SK-N-SH (cell line): ENCODE measurements at regions of chr20 and their contacts with region 1.

Region 1: DNA sequence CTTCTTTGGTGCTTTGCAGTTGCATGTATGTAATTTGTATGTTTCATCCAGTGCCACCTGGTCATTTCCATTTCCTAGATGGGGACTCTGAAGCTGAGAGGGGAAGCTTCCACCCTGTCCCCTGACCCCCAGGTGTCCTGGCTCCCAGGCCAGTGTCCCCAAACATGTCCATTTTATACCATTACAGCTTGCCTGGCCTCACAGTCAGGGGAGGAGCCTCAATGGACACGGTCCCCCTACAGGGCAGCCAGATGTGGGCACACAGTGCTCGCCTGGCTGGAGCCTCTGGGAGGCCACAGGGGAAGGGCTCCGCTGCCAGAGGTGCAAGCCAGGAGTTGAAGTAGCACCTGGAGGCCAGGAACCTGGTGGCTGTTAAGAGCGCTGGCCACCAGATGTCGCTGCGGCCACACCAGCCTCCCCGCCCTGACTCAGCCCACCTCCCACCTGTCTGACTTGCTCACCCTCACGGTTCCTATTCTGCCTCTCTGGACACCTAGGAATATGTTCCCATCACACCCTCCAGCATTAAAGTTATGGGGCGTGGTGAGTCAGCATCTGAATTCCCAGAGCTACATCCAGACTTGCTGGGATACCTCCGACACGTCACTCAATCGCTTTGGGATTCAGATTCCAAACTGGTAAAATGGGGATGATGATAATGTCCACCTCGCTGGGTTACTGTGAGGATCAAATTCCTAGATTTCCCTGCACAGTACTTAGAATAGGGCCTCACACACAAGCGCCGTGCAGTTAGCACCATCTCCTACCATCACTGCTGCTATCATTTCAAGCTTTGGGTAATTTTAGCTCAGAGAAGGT is 107.4 kb downstream of the SULF2 start:
- DNase-seq: peak; percentile 83
- H3K4me3 ChIP-seq: no peak overlapping the region; a peak in 1 of 4 replicates
- H3K27ac ChIP-seq: no peak overlapping the region
- H3K4me1 ChIP-seq: peaks cover 0 to 5% of the 10 kb centered on the region in 2 experiments; a peak in 1 of 4 replicates
- H3K27me3 ChIP-seq: no peaks in the 10 kb centered on the region
- CTCF ChIP-seq: peak; percentile 57
- EP300 ChIP-seq: no peak
- RAD21 ChIP-seq: peak; percentile 84

Region 2: GRCh38 chr20:47352332-47353238 is 325.3 kb before region 1 on chr20:
- CTCF ChIA-PET with region 1: no interaction called
- POLR2A ChIA-PET with region 1: no interaction called
- DNase-seq: peak; percentile 36
- H3K4me3 ChIP-seq: peak overlapping the region; percentile 19 to 52
- H3K27ac ChIP-seq: peak overlapping the region; percentile 97 to 100
- H3K4me1 ChIP-seq: peaks cover 72 to 79% of the 10 kb centered on the region in 2 experiments
- H3K27me3 ChIP-seq: no peaks in the 10 kb centered on the region
- CTCF ChIP-seq: no peak
- EP300 ChIP-seq: no peak
- RAD21 ChIP-seq: no peak

Region 3: DNA sequence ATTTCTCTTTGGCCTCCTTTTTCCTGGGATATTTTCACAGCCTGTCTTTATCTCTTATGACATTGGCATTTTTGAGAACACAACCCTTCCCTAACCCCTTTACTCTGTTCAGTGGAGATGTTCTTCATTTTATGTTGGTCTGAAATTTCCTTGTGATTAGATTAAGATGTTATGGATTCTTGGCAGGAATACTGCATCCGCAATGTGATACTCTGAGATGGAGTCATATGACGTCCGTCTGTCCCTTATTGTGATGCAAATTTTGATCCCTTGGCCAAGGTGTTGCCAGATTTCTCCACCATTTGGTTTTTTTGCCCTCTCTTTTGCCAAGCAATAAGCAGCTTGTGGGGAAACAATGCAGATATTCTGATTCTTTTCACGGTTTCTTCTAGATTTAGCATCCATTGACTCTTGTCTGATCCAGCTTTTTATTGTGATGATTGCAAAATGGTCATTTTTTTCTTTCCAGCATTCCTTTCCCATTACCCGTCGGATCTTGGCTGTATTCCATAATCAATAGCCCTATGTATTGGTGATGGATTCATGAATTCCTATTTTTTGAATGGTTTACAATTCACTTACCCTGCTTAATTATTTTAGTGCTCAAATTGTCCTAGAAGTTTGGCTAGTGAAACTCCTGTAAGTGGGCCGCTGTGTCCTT is 91.1 kb before region 1 on chr20:
- CTCF ChIA-PET with region 1: no interaction called
- POLR2A ChIA-PET with region 1: no interaction called
- DNase-seq: no peak
- H3K4me3 ChIP-seq: no peak overlapping the region
- H3K27ac ChIP-seq: peak overlapping the region; percentile 36 to 50; a peak in 3 of 4 replicates
- H3K4me1 ChIP-seq: no peaks in the 10 kb centered on the region
- H3K27me3 ChIP-seq: no peaks in the 10 kb centered on the region
- CTCF ChIP-seq: no peak
- EP300 ChIP-seq: no peak
- RAD21 ChIP-seq: no peak

Region 4: DNA sequence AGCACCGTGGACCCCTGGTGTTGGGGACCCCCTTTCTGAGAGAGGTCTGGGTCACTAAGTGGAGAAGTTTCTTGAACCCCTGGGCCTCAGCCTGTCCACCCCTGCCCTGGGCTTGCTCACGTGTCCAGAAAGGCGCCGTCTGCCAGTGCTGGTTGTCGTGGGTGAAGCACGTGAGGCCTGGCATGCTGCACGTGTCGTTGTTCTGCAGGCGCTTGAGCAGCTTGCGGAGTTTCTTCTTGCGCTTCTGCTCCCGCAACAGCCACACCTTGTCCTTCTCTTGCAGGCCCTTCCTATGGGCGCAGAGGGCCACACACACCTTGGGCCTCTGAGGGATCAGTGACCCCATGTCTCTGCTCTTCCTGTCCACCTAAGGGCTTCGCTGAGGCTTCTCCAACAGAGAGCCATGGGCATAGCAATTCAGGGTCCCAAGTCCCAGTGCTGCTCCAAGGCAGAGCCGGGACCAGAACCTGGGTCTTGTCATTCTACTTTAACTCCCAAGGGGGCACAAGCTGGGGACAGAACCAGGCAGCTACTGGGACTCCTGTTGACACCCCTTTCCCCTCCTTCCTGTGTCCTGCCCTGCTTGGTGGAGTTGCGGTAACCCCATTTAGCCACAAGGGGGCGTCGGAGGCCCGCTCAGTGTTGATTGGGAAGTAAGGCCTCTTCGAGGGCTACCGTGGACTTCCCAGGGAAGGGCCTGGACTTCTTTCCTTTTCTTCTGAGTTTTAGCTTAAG is 14.3 kb before region 1 on chr20:
- CTCF ChIA-PET with region 1: interaction called, 39 read pairs
- POLR2A ChIA-PET with region 1: no interaction called
- DNase-seq: peak; percentile 87
- H3K4me3 ChIP-seq: peak overlapping the region in 1 of 2 experiments; percentile 20; a peak in 1 of 4 replicates
- H3K27ac ChIP-seq: no peak overlapping the region
- H3K4me1 ChIP-seq: peaks cover 3 to 4% of the 10 kb centered on the region in 2 experiments; a peak in 2 of 4 replicates
- H3K27me3 ChIP-seq: no peaks in the 10 kb centered on the region
- CTCF ChIP-seq: peak; percentile 95
- EP300 ChIP-seq: no peak
- RAD21 ChIP-seq: peak; percentile 92

Region 5: DNA sequence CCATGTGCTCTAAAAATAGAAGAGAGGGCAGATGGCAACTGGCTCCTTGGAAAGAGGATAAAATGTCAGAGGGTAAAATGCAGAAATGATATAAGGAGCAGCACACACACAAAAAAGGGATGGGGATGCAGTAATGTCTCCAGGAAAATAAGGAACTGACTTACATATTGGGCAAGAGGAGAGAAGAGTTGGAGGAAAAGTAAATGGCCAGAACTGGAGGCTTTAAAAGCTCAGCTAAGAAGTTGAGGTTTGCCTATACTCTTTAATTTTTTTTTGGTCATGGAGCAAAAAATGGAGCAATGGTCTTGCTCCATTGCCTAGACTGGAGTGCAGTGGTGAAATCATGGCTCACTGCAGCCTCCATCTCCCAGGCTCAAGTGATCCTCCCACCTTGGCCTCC is 13.8 kb after region 1 on chr20:
- CTCF ChIA-PET with region 1: interaction called, 12 read pairs
- POLR2A ChIA-PET with region 1: no interaction called
- DNase-seq: no peak
- H3K4me3 ChIP-seq: no peak overlapping the region
- H3K27ac ChIP-seq: no peak overlapping the region
- H3K4me1 ChIP-seq: peaks cover 0 to 3% of the 10 kb centered on the region in 2 experiments; a peak in 2 of 4 replicates
- H3K27me3 ChIP-seq: no peaks in the 10 kb centered on the region
- CTCF ChIP-seq: no peak
- EP300 ChIP-seq: no peak
- RAD21 ChIP-seq: no peak

Region 6: GRCh38 chr20:47713878-47714450 is 36.1 kb after region 1 on chr20:
- CTCF ChIA-PET with region 1: interaction called, 37 read pairs
- POLR2A ChIA-PET with region 1: no interaction called
- DNase-seq: no peak
- H3K4me3 ChIP-seq: no peak overlapping the region
- H3K27ac ChIP-seq: no peak overlapping the region
- H3K4me1 ChIP-seq: peaks cover 0 to 32% of the 10 kb centered on the region in 2 experiments; a peak in 2 of 4 replicates
- H3K27me3 ChIP-seq: no peaks in the 10 kb centered on the region
- CTCF ChIP-seq: no peak
- EP300 ChIP-seq: no peak
- RAD21 ChIP-seq: no peak

Region 7: GRCh38 chr20:47725248-47725973 is 47.6 kb after region 1 on chr20:
- CTCF ChIA-PET with region 1: interaction called, 33 read pairs
- POLR2A ChIA-PET with region 1: no interaction called
- DNase-seq: peak; percentile 81
- H3K4me3 ChIP-seq: peak overlapping the region in 1 of 2 experiments; percentile 25; a peak in 1 of 4 replicates
- H3K27ac ChIP-seq: no peak overlapping the region
- H3K4me1 ChIP-seq: peaks cover 0 to 7% of the 10 kb centered on the region in 2 experiments; a peak in 1 of 4 replicates
- H3K27me3 ChIP-seq: no peaks in the 10 kb centered on the region
- CTCF ChIP-seq: peak; percentile 85
- EP300 ChIP-seq: no peak
- RAD21 ChIP-seq: peak; percentile 89

Region 8: GRCh38 chr20:47772995-47773716 is 95.3 kb after region 1 on chr20:
- CTCF ChIA-PET with region 1: interaction called, 25 read pairs
- POLR2A ChIA-PET with region 1: no interaction called
- DNase-seq: no peak
- H3K4me3 ChIP-seq: no peak overlapping the region
- H3K27ac ChIP-seq: no peak overlapping the region
- H3K4me1 ChIP-seq: peaks cover 0 to 17% of the 10 kb centered on the region in 2 experiments; a peak in 1 of 4 replicates
- H3K27me3 ChIP-seq: no peaks in the 10 kb centered on the region
- CTCF ChIP-seq: no peak
- EP300 ChIP-seq: no peak
- RAD21 ChIP-seq: no peak

Region 9: GRCh38 chr20:48065824-48066660 is 388.2 kb after region 1 on chr20:
- CTCF ChIA-PET with region 1: no interaction called
- POLR2A ChIA-PET with region 1: no interaction called
- DNase-seq: no peak
- H3K4me3 ChIP-seq: no peak overlapping the region
- H3K27ac ChIP-seq: no peak overlapping the region
- H3K4me1 ChIP-seq: no peaks in the 10 kb centered on the region
- H3K27me3 ChIP-seq: no peaks in the 10 kb centered on the region
- CTCF ChIP-seq: no peak
- EP300 ChIP-seq: no peak
- RAD21 ChIP-seq: no peak